Common myeloid progenitor, CD34-positive (primary cell): ENCODE measurements at regions of chr3 and their contacts with region 1.

Region 1: GRCh38 chr3:66253790-66254620 is 33.2 kb downstream of the SLC25A26 start:
- DNase-seq: peak; percentile 36 to 65 (median 55)
- H3K4me3 ChIP-seq: no peak overlapping the region
- H3K27ac ChIP-seq: no peak overlapping the region
- H3K4me1 ChIP-seq: peaks cover 0 to 3% (median 1%) of the 10 kb centered on the region in 4 experiments
- H3K27me3 ChIP-seq: no peaks in the 10 kb centered on the region

Region 2: GRCh38 chr3:66195347-66195783 is 58.6 kb before region 1 on chr3:
- CTCF ChIA-PET with region 1: no interaction called
- POLR2A ChIA-PET with region 1: no interaction called
- DNase-seq: peak; percentile 38 to 62 (median 58)
- H3K4me3 ChIP-seq: peak overlapping the region in 3 of 7 experiments; percentile 33 to 46 (median 40)
- H3K27ac ChIP-seq: no peak overlapping the region
- H3K4me1 ChIP-seq: peaks cover 0 to 7% (median 0%) of the 10 kb centered on the region in 4 experiments
- H3K27me3 ChIP-seq: peaks cover 0 to 21% (median 7%) of the 10 kb centered on the region in 5 experiments

Region 3: DNA sequence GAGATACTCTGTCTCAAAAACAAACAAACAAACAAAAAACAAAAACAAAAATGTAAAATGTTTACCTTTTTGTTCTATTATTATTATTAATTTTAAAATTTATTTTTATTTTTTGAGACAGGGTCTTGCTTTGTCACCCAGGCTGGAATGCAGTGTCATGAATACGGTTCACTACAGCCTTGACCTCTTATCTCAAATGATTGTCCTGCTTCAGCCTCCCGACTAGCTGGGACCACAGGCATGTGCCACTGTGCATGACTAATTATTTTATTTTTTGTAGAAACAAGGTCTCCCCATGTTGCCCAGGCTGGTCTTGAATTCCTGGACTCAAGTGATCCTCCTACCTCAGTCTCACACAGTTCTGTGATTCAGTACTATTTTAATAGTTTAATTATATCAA is 38.9 kb before region 1 on chr3:
- CTCF ChIA-PET with region 1: no interaction called
- POLR2A ChIA-PET with region 1: no interaction called
- DNase-seq: no peak
- H3K4me3 ChIP-seq: no peak overlapping the region
- H3K27ac ChIP-seq: no peak overlapping the region
- H3K4me1 ChIP-seq: peaks cover 0 to 4% (median 2%) of the 10 kb centered on the region in 4 experiments
- H3K27me3 ChIP-seq: no peaks in the 10 kb centered on the region

Region 4: DNA sequence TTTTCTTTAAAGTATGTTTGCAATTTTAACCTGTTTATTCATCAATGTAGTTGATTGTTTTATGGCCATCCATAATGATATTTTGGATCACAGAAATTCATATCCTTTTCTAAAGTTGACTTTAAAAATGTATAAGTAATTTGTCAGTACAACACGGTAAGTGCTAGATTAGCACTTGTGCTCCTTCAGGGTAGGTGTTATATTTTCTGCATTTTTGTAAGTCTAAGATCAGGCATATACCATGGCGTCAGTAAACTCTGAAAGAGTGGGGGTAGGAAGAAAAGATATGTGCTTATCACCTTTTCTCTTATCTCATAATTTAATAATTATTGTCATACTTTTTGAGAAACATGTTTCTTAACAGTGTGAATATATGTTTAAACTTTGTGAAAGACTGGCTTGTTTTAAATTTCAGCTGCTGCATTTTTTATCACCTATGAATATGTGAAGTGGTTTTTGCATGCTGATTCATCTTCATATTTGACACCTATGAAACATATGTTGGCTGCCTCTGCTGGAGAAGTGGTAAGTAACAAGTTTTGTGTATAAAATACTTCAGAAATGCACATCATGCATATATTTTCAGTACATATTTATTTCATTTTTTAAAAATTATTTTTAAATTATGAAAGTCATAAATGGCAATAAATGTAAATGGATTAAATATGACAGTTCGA is 11.1 kb before region 1 on chr3:
- CTCF ChIA-PET with region 1: interaction called, 17 read pairs
- POLR2A ChIA-PET with region 1: no interaction called
- DNase-seq: no peak
- H3K4me3 ChIP-seq: no peak overlapping the region
- H3K27ac ChIP-seq: no peak overlapping the region
- H3K4me1 ChIP-seq: no peaks in the 10 kb centered on the region
- H3K27me3 ChIP-seq: no peaks in the 10 kb centered on the region

Region 5: DNA sequence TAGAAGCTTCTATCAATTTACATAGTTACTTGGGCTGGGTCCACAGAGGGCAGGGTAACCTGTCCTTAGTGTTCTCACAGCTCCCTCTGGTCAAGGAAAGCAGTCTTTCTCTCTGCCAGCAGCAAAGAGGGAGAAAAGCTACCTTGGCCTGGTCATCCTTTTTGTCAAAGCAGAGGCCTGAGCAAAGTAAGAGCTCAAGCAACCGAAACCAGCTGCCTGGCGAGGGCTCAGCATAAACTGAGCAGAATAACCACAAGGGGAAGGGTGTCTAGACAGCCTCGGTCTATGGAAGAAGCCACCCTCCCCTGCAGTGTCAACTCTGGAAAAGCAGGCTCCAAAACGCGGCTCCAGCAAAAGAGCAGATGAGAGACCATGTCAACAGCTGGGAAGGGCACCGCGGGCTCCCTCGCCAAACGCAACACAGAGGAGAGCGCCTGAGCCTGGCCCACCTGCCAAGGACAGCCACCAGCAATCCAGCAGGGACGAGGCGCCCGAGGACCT is 229.5 kb after region 1 on chr3:
- CTCF ChIA-PET with region 1: no interaction called
- POLR2A ChIA-PET with region 1: no interaction called
- DNase-seq: peak in 2 of 3 donors; percentile 47 to 72
- H3K4me3 ChIP-seq: no peak overlapping the region
- H3K27ac ChIP-seq: no peak overlapping the region
- H3K4me1 ChIP-seq: peaks cover 18 to 49% (median 29%) of the 10 kb centered on the region in 4 experiments
- H3K27me3 ChIP-seq: no peaks in the 10 kb centered on the region